Dorsolateral prefrontal cortex (tissue), 120 donors: ENCODE measurements at regions of chr3 and their contacts with region 1.

Region 1: DNA sequence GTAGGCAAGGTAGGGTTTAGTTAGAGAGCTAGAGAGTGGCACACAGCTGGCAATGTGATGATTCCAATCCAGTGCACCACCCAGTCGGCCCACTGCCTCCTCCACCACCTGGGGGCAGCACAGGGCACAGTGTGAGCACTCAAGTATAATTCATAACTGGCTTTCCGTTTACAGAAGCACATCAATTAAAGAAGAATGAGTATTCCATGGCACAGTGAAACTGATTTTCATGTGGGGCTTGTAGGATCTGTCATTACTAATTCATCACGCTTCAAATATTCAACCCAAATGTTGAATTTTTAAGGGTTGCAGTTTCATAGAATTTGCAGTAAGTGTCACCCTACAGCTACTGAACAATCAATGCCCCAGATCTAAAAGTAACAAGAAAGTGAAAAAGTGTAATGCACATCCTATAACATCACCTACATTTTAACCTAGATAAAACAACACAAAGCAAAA is 149.9 kb downstream of the IGSF11 start:
- DNase-seq: peak; percentile 31 to 91 (median 82)
- H3K4me3 ChIP-seq: peak overlapping the region in 40 of 59 donors; percentile 3 to 51 (median 34)
- H3K27ac ChIP-seq: peak overlapping the region in 5 of 59 donors; percentile 1 to 41 (median 13)
- H3K27me3 ChIP-seq: peaks cover 0 to 5% (median 0%) of the 10 kb centered on the region in 45 donors
- CTCF ChIP-seq: peak; percentile 78 to 100 (median 97)

Region 2: DNA sequence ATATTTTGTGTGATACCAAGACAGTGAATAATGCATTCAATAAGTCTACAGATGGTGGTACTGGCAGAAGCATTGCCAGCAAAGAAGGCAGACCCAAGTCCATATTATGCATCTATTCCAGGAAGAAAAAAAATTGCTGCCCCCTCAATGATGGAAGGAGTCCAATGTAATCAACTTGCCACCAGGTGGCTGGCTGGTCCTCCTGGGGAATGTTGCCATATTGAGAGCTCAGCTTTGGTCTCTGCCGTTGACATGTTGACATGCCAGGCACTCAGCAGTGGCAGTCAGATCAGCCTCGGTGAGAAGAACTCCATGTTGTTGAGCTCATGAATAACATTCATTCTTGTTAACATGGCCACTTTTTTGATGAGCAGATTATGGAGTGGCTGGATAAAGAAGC is 148.7 kb before region 1 on chr3:
- intact Hi-C with region 1: no loop called
- DNase-seq: no peak
- H3K4me3 ChIP-seq: no peak overlapping the region
- H3K27ac ChIP-seq: no peak overlapping the region
- H3K27me3 ChIP-seq: no peaks in the 10 kb centered on the region
- CTCF ChIP-seq: no peak

Region 3: GRCh38 chr3:118943597-118943996 is 58.8 kb after region 1 on chr3:
- intact Hi-C with region 1: loop called in 1 of 2 experiments (anchors 5 kb)
- DNase-seq: no peak
- H3K4me3 ChIP-seq: no peak overlapping the region
- H3K27ac ChIP-seq: peak overlapping the region in 37 of 59 donors; percentile 1 to 72 (median 48)
- H3K27me3 ChIP-seq: no peaks in the 10 kb centered on the region
- CTCF ChIP-seq: no peak

Region 4: DNA sequence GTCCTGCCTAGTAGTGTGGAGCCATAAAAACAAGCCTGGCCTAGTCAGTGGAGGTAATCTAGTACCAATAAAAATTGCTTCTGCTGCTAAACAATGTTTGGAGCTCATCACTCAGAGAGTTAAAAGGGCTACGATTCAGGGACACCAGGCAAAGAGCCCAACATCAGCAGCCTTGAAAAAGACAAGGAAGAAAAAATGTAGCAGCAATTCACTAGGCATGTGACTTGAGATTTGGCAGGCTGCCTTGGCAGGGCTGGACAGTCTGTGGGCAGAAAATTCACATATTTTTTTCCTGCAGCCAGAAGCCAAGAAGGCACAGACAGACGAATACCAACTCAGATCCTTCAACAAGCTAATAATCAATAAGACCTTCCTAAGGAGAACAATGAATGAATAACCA is 102.7 kb after region 1 on chr3:
- intact Hi-C with region 1: loop called (anchors 5 to 10 kb)
- DNase-seq: peak; percentile 32 to 92 (median 83)
- H3K4me3 ChIP-seq: peak overlapping the region in 7 of 59 donors; percentile 3 to 35 (median 22)
- H3K27ac ChIP-seq: peak overlapping the region; percentile 57 to 100 (median 97)
- H3K27me3 ChIP-seq: no peaks in the 10 kb centered on the region
- CTCF ChIP-seq: peak in 11 of 56 donors; percentile 4 to 36 (median 18)

Region 5: GRCh38 chr3:119098619-119099222 is 213.9 kb after region 1 on chr3:
- intact Hi-C with region 1: loop called (anchors 1 to 2 kb)
- DNase-seq: no peak
- H3K4me3 ChIP-seq: no peak overlapping the region
- H3K27ac ChIP-seq: no peak overlapping the region
- H3K27me3 ChIP-seq: no peaks in the 10 kb centered on the region
- CTCF ChIP-seq: peak; percentile 60 to 99 (median 80)

Region 6: GRCh38 chr3:119240591-119241434 is 356.0 kb after region 1 on chr3 and contains the start of gene B4GALT4:
- intact Hi-C with region 1: loop called (anchors 5 kb)
- DNase-seq: peak; percentile 59 to 89 (median 80)
- H3K4me3 ChIP-seq: peak within 1 kb of the TSS; percentile 55 to 93 (median 81)
- H3K27ac ChIP-seq: peak within 1 kb of the TSS; percentile 73 to 97 (median 91)
- H3K27me3 ChIP-seq: no peaks in the 10 kb centered on the region
- CTCF ChIP-seq: peak in 18 of 56 donors; percentile 14 to 40 (median 20)
- total RNA-seq, gene B4GALT4: 7.4 to 34.5 (median 16.0) TPM